ENCODE measurements at regions of chr14 and their contacts with region 1.

Region 1: DNA sequence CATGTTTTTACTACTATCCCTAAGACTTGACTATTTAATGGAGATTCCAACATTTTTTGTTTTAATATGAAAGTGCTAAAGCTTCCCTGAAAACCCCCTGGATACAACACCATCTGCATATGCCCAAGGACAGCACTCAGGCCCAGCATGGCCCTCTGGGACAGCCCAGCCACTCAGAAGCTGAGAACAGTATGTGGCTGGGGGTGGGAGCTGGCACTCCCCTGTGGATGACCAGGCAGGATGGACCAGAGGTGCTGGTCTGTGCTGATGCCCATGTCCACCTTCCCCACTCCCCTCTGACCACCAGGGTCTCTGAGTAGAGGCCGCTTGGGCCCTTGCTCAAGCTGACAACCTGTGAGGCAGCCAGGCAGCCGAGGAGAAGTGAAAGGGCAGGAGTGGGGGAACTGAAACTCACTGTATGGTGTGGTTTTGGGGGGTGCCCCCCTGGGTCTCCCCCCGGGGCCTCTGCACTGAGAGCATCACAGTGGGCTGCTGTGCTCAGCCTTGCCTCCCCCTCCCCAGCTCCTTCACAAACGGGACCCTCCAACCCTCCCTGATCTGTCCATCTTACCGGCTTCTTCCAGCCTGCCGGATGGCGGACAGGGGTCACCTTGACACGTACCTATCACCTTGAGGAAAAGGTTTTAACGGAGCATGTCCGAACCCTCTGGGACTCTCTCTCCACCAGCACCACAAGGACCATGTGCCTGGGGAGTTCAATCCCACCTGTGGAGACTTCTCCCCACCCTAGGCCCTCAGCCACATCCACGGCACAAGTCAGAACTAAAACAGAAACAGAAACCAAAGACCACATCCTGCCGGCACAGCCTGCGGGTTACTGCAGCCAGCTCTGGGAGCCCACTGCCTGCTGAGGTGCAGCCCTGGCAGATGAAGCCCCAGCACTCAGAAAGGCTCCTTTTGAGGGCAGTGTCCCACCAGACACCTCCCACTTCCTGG is at the start of gene TMEM229B:
- DNase-seq: peak; percentile 84
- ATAC-seq: peak; percentile 85
- H3K4me3 Mint-ChIP-seq: peak within 1 kb of the TSS; percentile 88
- H3K27ac Mint-ChIP-seq: peak within 1 kb of the TSS; percentile 99
- H3K4me1 Mint-ChIP-seq: peaks cover 85% of the 10 kb centered on the region
- H3K27me3 Mint-ChIP-seq: no peaks in the 10 kb centered on the region
- CTCF ChIP-seq: no peak
- total RNA-seq, gene TMEM229B: 3.3 and 3.7 TPM in 2 replicates

Region 2: DNA sequence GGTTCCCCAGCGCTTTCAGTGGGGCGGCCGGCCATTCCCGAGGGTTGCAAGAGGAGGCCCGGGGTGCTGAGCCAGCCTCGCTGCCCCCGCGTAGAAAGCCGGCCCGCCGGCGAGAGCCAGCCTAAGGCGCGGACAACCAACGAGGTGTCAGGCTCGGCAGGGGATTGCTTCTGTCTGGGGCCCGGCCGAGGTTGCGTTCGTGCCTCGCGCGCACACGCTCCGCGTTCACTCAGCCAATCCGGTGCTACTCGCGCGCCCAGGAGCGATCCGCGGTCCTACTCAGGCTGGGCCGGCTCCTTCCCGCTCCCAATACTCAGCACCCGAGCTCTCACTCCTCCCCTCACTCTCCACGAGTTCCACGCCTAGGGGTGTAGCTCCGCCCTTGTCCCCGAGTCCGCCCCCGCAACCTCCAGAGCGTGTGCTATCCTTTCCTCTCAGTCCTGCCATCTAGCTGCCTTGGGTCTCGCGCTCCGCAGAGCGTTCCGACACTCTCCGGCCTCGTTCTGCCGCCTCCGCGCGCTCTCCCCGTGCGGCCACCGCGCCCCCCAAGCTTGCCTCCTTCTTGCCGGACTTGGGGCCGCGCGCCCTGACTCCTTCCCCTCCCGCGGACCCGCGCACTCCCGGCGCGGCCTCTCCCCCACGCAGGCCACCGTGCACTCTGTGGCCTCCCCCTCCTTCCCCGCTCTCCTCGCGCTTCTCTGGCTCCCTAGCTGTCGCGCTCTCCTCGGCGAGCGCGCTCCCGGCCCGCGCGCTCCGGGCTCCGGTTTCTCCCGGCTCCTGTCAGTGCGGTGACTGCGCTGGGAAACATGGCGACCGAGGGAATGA is 980.3 kb before region 1 on chr14 and contains the start of gene GPHN:
- CTCF ChIA-PET with region 1: no interaction called
- POLR2A ChIA-PET with region 1: no interaction called
- intact Hi-C with region 1: loop called (anchors 2 kb)
- DNase-seq: peak; percentile 75
- ATAC-seq: peak; percentile 85
- H3K4me3 Mint-ChIP-seq: peak within 1 kb of the TSS; percentile 97
- H3K27ac Mint-ChIP-seq: peak within 1 kb of the TSS; percentile 86
- H3K4me1 Mint-ChIP-seq: peaks cover 23% of the 10 kb centered on the region
- H3K27me3 Mint-ChIP-seq: peaks cover 6% of the 10 kb centered on the region
- CTCF ChIP-seq: no peak
- total RNA-seq, gene GPHN: 36.9 and 40.8 TPM in 2 replicates

Region 3: DNA sequence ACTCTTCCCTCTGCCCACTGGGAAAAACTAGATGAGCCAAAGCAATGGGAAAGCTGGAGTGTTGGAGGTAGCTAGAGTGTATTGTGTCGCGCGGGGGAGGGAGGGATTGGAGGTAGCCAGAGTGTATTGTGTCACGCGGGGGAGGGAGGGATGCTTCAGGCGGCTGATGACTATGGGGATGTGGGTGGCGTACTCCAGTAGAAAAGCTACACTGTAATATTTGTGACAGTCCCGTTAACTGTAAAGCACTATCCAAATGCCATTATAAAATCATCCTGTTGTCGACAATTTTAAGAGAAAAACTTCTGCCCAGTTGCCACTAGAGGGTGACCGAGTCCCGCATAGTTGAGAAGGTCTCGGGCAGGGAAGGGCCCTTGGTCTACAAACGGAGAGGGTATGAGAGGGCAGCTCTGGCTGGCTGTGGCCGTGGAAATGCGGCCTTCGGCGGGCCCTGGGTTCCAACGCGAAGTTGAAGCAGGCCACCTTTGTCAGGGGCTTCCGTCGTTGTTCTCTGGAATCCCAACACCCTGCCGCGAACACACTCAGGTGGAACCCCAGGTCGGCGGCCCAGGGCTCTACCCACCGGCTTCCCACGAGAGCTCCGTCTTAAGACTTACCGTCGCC is 61.1 kb before region 1 on chr14:
- CTCF ChIA-PET with region 1: interaction called, 11 read pairs
- POLR2A ChIA-PET with region 1: interaction called, 3 read pairs
- intact Hi-C with region 1: loop called (anchors 1 kb)
- DNase-seq: peak; percentile 61
- ATAC-seq: peak; percentile 98
- H3K4me3 Mint-ChIP-seq: no peak overlapping the region
- H3K27ac Mint-ChIP-seq: no peak overlapping the region
- H3K4me1 Mint-ChIP-seq: peaks cover 3% of the 10 kb centered on the region
- H3K27me3 Mint-ChIP-seq: peaks cover 11% of the 10 kb centered on the region
- CTCF ChIP-seq: peak; percentile 76

Region 4: DNA sequence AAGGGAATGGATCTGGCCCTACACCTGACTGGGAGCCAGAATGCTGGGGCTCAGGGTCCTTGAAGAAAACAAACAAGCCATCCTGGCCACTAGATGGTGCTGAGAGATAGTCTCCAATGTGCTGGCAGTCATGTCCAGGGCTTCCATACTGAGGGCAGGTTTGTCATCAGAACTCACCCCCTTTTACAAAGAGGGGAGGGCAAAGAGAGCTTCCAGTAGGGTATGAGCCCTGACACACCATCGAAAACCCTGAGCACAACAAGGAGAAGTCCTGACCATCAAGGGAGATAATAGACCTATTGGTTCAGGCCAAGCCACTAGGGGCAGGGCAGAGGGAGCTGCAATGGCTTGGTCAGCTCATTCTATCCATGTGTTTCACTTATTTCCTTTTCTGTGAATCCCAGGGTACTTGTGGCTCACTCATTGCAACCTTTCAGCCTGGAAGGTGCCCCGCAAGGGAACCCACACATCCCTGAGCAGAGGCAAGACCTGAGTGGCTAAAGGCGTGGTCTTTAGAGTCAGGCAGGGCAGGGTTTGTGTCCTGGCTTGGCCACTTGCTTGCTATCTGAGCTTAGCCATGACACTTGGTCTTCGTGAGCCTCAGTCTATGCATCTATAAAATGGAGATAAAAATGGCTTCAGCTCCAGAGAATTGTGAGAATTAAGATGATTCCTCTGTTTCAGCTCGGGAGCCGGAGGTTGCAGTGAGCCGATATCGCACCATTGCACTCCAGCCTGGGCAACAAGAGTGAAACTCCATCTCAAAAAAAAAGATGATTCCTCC is 38.7 kb after region 1 on chr14:
- CTCF ChIA-PET with region 1: interaction called, 4 read pairs
- POLR2A ChIA-PET with region 1: interaction called, 3 read pairs
- intact Hi-C with region 1: loop called (anchors 1 kb)
- DNase-seq: no peak
- ATAC-seq: peak; percentile 77
- H3K4me3 Mint-ChIP-seq: no peak overlapping the region
- H3K27ac Mint-ChIP-seq: no peak overlapping the region
- H3K4me1 Mint-ChIP-seq: peaks cover 3% of the 10 kb centered on the region
- H3K27me3 Mint-ChIP-seq: peaks cover 51% of the 10 kb centered on the region
- CTCF ChIP-seq: peak; percentile 20

Region 5: GRCh38 chr14:67599698-67600561 is 111.7 kb after region 1 on chr14 and contains the start of gene PIGH:
- CTCF ChIA-PET with region 1: interaction called, 5 read pairs
- POLR2A ChIA-PET with region 1: interaction called, 5 read pairs
- intact Hi-C with region 1: loop called (anchors 1 kb)
- DNase-seq: peak; percentile 99
- ATAC-seq: peak; percentile 90
- H3K4me3 Mint-ChIP-seq: peak within 1 kb of the TSS; percentile 96
- H3K27ac Mint-ChIP-seq: peak within 1 kb of the TSS; percentile 95
- H3K4me1 Mint-ChIP-seq: peaks cover 61% of the 10 kb centered on the region
- H3K27me3 Mint-ChIP-seq: no peaks in the 10 kb centered on the region
- CTCF ChIP-seq: no peak
- total RNA-seq, gene PIGH: 21.9 and 26.4 TPM in 2 replicates

Region 6: DNA sequence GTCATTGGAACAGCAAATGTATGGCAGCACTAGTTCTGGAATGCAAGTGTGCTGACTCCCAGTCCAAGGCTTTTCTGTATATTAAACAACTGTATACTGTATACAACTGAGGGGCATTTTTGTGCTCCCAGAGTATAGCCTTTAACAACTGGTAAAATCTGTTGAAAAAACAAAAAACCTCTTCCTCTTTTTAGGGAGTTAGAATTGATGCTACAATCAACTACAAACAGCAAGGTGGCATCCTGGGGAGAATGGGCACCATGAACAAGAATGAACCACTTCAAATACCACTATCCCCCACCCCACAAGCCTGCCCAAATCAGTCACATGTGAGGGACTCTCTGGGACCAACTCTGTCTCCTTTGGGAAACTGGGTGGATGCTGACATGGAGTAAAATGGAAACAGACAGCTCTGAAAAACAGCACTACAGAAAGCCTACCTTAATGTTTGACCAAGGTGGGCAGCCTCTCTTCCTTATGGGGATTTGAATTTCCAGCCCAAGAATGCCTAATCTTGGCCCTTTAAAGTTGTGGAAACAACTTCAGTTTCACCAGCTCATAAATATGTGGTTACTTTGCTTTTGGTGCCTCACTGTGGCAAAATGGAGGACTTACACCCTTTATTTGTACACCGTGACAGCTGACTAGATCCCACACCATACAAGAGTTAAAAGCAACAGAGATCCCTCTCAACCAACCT is 178.7 kb after region 1 on chr14:
- CTCF ChIA-PET with region 1: no interaction called
- POLR2A ChIA-PET with region 1: no interaction called
- intact Hi-C with region 1: loop called (anchors 1 kb)
- DNase-seq: no peak
- ATAC-seq: peak; percentile 87
- H3K4me3 Mint-ChIP-seq: peak overlapping the region; percentile 44
- H3K27ac Mint-ChIP-seq: peak overlapping the region; percentile 68
- H3K4me1 Mint-ChIP-seq: peaks cover 58% of the 10 kb centered on the region
- H3K27me3 Mint-ChIP-seq: no peaks in the 10 kb centered on the region
- CTCF ChIP-seq: no peak

Region 7: DNA sequence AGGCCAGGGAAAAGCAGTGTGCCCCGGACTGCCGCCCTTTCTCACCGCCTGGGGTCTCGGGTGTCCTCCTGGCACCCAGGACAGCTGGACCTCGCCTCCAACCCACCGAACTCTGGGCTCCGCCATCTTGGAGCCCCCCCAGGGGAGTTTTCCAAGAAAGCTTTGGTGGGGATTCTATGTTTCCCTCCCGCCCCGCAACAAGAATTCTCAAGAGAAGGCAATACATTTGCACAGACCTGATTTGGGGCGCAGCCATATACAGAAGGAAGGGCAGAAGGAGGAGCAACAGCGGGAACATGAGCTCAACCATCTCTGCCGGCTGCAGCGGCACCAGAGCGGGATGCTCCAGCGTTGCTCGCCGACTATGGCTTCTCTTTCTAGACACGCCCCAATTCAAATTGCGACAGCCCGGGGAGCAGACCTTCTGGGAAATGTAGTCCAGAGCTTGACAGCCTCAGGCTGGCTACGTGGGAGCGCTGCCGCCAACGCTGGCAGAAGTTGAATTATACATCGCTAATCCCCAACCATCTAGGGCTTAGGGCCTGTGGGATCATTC is 207.3 kb after region 1 on chr14 and contains the start of gene RDH11:
- CTCF ChIA-PET with region 1: no interaction called
- POLR2A ChIA-PET with region 1: no interaction called
- intact Hi-C with region 1: loop called (anchors 1 kb)
- DNase-seq: peak; percentile 59
- ATAC-seq: peak; percentile 94
- H3K4me3 Mint-ChIP-seq: peak within 1 kb of the TSS; percentile 89
- H3K27ac Mint-ChIP-seq: peak within 1 kb of the TSS; percentile 88
- H3K4me1 Mint-ChIP-seq: peaks cover 13% of the 10 kb centered on the region
- H3K27me3 Mint-ChIP-seq: no peaks in the 10 kb centered on the region
- CTCF ChIP-seq: no peak
- total RNA-seq, gene RDH11: 33.0 and 34.7 TPM in 2 replicates

Measured in activated B cell treated with CpG ODN at 0.5 μM for 24 hours (primary cell).